T-cell (primary cell): ENCODE measurements at regions of chr6 and their contacts with region 1.

Region 1: GRCh38 chr6:132498638-132499037 is 14.3 kb downstream of the STX7 start:
- DNase-seq: no peak
- ATAC-seq: no peak
- H3K4me3 ChIP-seq: no peak overlapping the region
- H3K4me3 Mint-ChIP-seq: no peak overlapping the region
- H3K27ac ChIP-seq: no peak overlapping the region
- H3K27ac Mint-ChIP-seq: peak overlapping the region in 1 of 2 donors; percentile 33
- H3K4me1 ChIP-seq: no peaks in the 10 kb centered on the region
- H3K4me1 Mint-ChIP-seq: peaks cover 28 to 64% (median 60%) of the 10 kb centered on the region in 3 donors
- H3K27me3 ChIP-seq: no peaks in the 10 kb centered on the region
- H3K27me3 Mint-ChIP-seq: no peaks in the 10 kb centered on the region

Region 2: GRCh38 chr6:132483779-132484679 is 14.6 kb before region 1 on chr6:
- CTCF ChIA-PET with region 1: interaction called, 9 to 29 read pairs
- POLR2A ChIA-PET with region 1: no interaction called
- DNase-seq: peak in 26 of 35 experiments; percentile 6 to 80 (median 33)
- ATAC-seq: peak; percentile 50 to 70 (median 68)
- H3K4me3 ChIP-seq: no peak overlapping the region
- H3K4me3 Mint-ChIP-seq: no peak overlapping the region
- H3K27ac ChIP-seq: no peak overlapping the region
- H3K27ac Mint-ChIP-seq: no peak overlapping the region
- H3K4me1 ChIP-seq: no peaks in the 10 kb centered on the region
- H3K4me1 Mint-ChIP-seq: peaks cover 14 to 27% (median 18%) of the 10 kb centered on the region in 3 donors
- H3K27me3 ChIP-seq: no peaks in the 10 kb centered on the region
- H3K27me3 Mint-ChIP-seq: no peaks in the 10 kb centered on the region